Adrenal gland (tissue), 19 donors: ENCODE measurements at regions of chr18 and their contacts with region 1.

Region 1: DNA sequence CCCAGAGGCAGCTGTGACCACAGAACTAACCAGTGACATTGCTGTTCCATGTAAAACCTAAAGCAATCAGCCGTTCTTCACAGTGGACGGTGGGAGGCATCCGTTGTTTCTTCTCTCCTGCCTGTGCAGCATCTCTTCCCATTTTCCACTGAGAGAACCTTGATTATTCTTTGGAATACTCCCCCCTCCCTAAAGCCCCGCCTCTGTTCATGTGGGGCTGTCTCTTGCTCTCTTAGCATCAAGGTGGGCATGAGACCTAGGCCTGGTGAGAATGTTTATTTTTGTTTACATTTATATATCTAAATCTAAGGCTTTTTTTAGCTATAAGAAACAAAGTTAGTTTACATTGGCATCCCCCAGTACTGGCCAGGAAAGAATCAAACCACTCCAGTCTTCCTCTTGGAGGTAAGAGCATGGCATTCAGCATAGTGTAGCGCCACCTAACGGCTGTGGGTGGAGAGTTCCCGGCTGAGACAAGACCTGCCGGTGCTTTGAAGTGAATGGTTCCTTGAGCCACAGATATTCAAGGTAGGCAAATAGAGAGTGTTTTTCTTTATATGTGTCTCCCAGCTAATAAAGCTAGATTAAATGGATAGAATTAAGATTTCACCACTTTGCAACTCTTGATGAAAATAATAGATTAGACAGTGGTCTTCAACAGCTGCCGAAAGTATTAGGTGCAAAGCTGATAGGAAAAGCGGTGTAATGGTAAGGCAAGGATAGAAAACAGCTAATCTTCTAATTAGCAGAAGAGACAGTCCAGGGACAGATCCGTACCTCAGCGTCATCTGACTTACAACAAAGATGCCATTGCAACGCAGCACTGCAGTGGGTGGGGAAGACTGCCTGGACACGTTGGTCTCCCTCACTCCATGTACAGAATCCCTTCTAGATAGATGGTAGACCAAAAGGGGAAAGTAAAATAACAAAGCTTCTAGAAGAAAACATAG is 219.6 kb upstream of the RAB12 start:
- DNase-seq: peak; percentile 56 to 87 (median 71)
- H3K4me3 ChIP-seq: no peak overlapping the region
- H3K27ac ChIP-seq: no peak overlapping the region
- H3K4me1 ChIP-seq: peaks cover 0 to 6% of the 10 kb centered on the region in 2 donors
- H3K27me3 ChIP-seq: no peaks in the 10 kb centered on the region
- CTCF ChIP-seq: peak; percentile 51 to 75 (median 68)
- POLR2A ChIP-seq: no peak

Region 2: DNA sequence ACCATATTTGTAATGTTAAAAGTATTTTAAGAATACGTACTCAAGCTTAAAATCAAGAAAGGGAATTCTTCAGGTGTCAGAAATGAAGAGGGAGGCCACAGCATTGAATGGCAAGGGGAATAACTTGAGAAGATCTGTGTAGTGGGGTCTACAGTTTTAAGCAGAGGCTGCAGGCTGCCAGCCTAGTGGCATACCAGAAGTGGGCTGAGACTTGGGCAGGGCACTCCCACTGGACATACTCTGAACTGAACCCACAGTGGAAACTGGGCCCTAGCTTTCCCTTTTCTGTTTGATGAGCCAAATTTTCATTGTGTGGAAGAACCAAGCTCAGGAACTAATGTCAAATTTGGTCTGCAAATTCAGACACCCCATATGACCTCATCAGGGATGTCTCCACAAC is 583.8 kb before region 1 on chr18:
- intact Hi-C with region 1: loop called in 1 of 2 experiments (anchors 10 kb)
- DNase-seq: no peak
- H3K4me3 ChIP-seq: no peak overlapping the region
- H3K27ac ChIP-seq: no peak overlapping the region
- H3K4me1 ChIP-seq: no peaks in the 10 kb centered on the region
- H3K27me3 ChIP-seq: no peaks in the 10 kb centered on the region
- CTCF ChIP-seq: no peak
- POLR2A ChIP-seq: no peak

Region 3: GRCh38 chr18:8084160-8084559 is 305.5 kb before region 1 on chr18:
- intact Hi-C with region 1: loop called in 1 of 2 experiments (anchors 10 kb)
- DNase-seq: peak; percentile 21 to 78 (median 36)
- H3K4me3 ChIP-seq: no peak overlapping the region
- H3K27ac ChIP-seq: no peak overlapping the region
- H3K4me1 ChIP-seq: no peaks in the 10 kb centered on the region
- H3K27me3 ChIP-seq: no peaks in the 10 kb centered on the region
- CTCF ChIP-seq: peak; percentile 29 to 65 (median 56)
- POLR2A ChIP-seq: no peak

Region 4: GRCh38 chr18:8635087-8635486 is 245.4 kb after region 1 on chr18:
- intact Hi-C with region 1: no loop called
- DNase-seq: no peak
- H3K4me3 ChIP-seq: no peak overlapping the region
- H3K27ac ChIP-seq: no peak overlapping the region
- H3K4me1 ChIP-seq: no peaks in the 10 kb centered on the region
- H3K27me3 ChIP-seq: no peaks in the 10 kb centered on the region
- CTCF ChIP-seq: no peak
- POLR2A ChIP-seq: no peak